BJ (cell line): ENCODE measurements at regions of chr1 and their contacts with region 1.

Region 1: DNA sequence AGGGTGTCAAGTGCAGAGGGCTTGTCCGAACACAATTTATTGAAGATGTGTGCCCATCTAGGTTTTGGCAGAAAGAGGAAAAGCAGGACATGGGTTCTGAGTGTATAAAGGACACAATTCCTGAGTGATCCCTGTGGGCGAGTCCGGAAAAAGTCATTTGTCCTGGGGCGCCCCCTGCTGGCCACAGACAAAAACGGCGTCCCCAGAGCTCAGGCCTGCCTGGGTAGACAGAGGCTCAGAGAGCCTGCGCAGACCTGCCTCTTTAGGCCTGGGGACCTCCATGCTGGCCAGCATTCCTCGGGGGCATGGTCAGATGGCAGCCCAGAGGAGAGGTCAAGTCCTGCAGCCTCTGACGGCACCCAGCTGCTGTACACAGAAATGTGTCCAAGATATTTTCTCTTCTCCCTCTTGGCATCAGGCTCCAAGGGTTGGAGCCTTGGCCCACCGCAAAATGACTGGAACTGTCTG is 65.5 kb upstream of the LRP8 start:
- DNase-seq: no peak
- H3K4me3 ChIP-seq: no peak overlapping the region
- H3K27me3 ChIP-seq: peaks cover 3% of the 10 kb centered on the region
- CTCF ChIP-seq: peak; percentile 82

Region 2: DNA sequence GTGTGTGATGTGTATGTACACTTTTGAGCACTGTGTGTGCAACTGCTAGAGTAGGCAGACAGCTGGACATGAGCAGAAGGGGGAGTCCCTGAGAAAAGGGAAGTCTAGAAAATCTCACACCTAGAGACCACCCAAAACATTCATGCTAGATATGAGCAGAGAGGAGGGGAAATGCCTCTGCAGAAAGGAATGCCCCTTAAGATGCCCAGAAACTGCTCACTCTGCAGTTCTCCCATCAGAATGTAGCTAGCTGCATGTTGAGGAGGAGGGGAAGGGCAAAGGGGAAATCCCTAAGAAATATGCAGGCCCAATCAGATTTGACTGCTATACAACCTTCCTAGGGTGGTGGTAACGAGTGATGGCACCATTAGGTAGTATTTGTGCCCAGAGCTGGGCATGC is 123.3 kb before region 1 on chr1:
- CTCF ChIA-PET with region 1: interaction called, 23 read pairs
- POLR2A ChIA-PET with region 1: no interaction called
- DNase-seq: no peak
- H3K4me3 ChIP-seq: no peak overlapping the region
- H3K27me3 ChIP-seq: no peaks in the 10 kb centered on the region
- CTCF ChIP-seq: no peak

Region 3: DNA sequence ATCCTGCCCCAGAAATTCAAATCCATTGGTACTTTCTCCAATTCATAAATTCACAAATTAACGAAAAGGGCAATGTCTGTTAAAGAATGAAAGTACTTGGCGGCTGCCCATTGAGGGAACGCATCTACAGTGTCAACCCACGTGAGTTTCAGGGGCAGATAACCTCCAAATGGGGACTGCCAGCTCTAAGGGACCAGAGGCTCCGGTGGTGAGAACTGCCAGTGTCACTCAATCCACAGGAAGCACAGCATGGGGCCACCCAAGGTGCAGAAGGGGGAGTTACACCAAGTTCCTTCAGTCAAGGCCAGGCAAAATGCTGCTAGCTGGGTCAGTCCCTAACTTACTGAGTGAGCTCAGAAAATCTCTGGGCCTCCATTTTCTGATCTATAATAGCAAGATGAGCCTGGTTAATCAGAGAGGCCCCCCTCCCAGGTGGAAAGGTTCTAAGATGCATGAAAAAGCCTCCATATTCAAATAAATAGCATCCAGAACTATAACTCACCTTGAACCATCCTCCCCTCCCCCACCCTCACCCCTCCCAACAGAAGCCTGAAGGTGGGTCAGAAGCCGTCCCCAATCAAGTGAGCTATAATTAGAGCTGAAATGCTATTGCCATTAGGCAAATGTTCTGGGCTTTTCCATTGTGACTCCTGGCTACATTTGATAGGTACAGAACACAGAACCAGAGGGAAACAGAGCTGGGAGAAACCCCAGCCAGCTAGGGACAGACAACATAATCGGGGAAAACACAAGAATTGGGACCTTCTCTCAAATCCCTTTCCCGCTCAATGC is 107.2 kb before region 1 on chr1:
- CTCF ChIA-PET with region 1: interaction called, 25 read pairs
- POLR2A ChIA-PET with region 1: no interaction called
- DNase-seq: no peak
- H3K4me3 ChIP-seq: no peak overlapping the region
- H3K27me3 ChIP-seq: no peaks in the 10 kb centered on the region
- CTCF ChIP-seq: no peak

Region 4: DNA sequence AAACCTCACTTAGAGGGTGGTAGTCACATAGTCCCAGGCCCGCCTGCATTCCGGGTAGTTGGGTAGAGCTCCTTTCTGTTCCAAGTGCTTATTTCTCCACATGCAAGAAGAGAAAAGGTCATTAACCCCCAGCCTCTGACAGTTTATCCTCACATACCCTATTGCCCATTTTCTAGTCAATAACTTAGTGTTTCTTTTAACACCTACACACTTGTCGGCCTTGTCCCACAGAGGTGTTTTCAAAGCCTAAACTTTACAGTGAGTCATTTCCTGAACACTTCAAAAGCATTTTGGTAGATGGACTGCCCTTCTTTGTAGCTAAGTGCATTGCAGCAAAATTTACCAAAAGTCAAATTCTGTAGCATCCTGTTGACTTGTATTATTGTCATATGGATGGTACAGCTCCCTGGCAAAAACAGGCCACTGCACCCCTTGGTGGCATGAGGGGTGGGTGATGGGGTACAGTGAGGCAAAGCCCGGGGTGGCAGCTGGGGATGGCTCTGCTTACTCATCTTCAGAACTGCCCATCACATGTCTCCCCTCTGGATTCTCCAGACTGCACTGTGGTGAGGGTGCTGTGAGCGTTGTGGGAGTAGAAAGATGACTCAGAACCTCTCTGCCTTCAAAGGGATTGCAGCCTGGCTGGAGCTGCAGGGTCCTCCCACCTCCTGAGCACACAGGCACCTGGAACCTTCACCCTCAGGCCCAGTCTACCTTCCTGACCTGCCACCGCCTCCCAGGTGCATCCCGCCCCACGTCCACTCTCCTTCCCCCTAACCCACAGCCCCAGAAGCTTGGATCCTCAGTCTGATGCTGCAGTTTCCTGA is 20.0 kb after region 1 on chr1:
- CTCF ChIA-PET with region 1: interaction called, 13 read pairs
- POLR2A ChIA-PET with region 1: no interaction called
- DNase-seq: peak; percentile 31
- H3K4me3 ChIP-seq: no peak overlapping the region
- H3K27me3 ChIP-seq: 0 out of 2 replicates have a peak, but pooled peaks cover 2% of the 10 kb centered on the region
- CTCF ChIP-seq: no peak

Region 5: GRCh38 chr1:53430261-53430660 is 36.9 kb after region 1 on chr1:
- CTCF ChIA-PET with region 1: no interaction called
- POLR2A ChIA-PET with region 1: no interaction called
- DNase-seq: no peak
- H3K4me3 ChIP-seq: no peak overlapping the region
- H3K27me3 ChIP-seq: peaks cover 2% of the 10 kb centered on the region; the same call in 1 of the 2 replicates
- CTCF ChIP-seq: no peak